HCT116 (cell line): ENCODE measurements at regions of chr1 and their contacts with region 1.

Region 1: GRCh38 chr1:241485554-241485992 is 34.0 kb downstream of the FH start:
- DNase-seq: peak; percentile 12
- ATAC-seq: peak; percentile 74
- H3K4me3 ChIP-seq: no peak overlapping the region
- H3K27ac ChIP-seq: no peak overlapping the region
- H3K4me1 ChIP-seq: peaks cover 2 to 19% of the 10 kb centered on the region in 2 experiments; a peak in 3 of 4 replicates
- H3K27me3 ChIP-seq: no peaks in the 10 kb centered on the region
- CTCF ChIP-seq: peak; percentile 15 to 61 (median 51); a peak in 4 of 6 replicates
- POLR2A ChIP-seq: no peak
- RAD21 ChIP-seq: peak; percentile 41; the same call in 1 of the 2 replicates

Region 2: DNA sequence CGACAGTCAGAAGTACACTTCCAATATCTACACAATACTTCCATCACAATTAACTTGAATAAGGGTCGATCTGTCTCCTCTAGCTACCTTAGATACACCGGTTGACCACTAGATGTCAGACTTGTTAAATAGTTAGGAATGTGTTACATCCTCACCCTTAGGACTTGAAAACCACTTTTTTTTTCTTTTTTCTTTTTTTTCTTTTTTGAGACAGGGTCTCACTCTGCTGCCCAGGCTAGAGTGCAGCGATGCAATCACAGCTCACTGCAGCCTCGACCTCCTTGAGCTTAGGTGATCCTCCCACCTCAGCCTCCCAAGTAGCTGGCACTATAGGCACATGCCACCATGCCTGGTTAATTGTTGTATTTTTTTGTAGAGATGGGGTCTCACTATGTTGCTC is 753.2 kb before region 1 on chr1:
- CTCF ChIA-PET with region 1: interaction called, 6 read pairs
- POLR2A ChIA-PET with region 1: no interaction called
- RAD21 ChIA-PET with region 1: no interaction called
- intact Hi-C with region 1: loop called (anchors 1 kb)
- DNase-seq: peak; percentile 12
- ATAC-seq: peak; percentile 76
- H3K4me3 ChIP-seq: no peak overlapping the region
- H3K27ac ChIP-seq: no peak overlapping the region
- H3K4me1 ChIP-seq: no peaks in the 10 kb centered on the region
- H3K27me3 ChIP-seq: no peaks in the 10 kb centered on the region
- CTCF ChIP-seq: peak; percentile 12 to 48 (median 32); a peak in 4 of 6 replicates
- POLR2A ChIP-seq: no peak
- RAD21 ChIP-seq: peak; percentile 56

Region 3: DNA sequence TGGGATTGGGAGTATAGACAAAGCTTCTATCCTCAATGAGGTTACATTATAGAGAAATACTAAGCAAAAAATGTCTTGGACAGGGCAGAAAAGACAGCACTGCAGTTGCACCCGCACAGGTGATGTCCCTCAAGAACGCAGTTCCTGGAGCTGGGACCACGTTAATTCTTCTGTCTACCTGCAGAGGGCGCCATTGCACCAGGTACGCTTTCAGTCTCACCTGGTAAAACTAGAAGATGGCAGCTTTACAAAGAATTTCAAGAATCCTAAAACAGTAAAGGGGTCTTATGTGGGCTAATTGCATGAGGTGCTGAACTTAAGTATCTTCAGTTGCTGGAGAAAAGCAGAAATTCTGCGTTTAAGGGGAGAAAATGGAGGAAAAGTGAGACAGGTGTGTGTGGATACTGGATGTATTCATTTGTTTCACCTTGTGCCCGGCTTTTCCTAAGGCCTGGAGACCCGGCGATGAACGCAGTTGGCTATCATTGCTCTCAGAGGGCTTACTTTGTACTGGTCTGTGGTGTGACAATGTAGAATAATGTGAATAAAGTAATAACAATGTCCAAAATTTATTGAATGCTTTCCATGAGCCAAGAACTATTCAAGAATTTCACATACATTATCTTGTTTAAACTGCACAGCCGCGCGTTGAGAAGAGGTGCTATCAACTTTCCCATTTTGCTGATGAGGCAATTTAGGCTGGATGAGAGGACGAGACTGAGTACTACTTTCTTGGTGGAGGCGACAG is 597.4 kb before region 1 on chr1:
- CTCF ChIA-PET with region 1: interaction called, 10 read pairs
- POLR2A ChIA-PET with region 1: no interaction called
- RAD21 ChIA-PET with region 1: no interaction called
- intact Hi-C with region 1: loop called (anchors 1 kb)
- DNase-seq: peak; percentile 3
- ATAC-seq: peak; percentile 65; the same call in 1 of the 2 replicates
- H3K4me3 ChIP-seq: no peak overlapping the region
- H3K27ac ChIP-seq: no peak overlapping the region
- H3K4me1 ChIP-seq: no peaks in the 10 kb centered on the region
- H3K27me3 ChIP-seq: no peaks in the 10 kb centered on the region
- CTCF ChIP-seq: peak; percentile 18 to 78 (median 53); a peak in 5 of 6 replicates
- POLR2A ChIP-seq: no peak
- RAD21 ChIP-seq: peak; percentile 53

Region 4: DNA sequence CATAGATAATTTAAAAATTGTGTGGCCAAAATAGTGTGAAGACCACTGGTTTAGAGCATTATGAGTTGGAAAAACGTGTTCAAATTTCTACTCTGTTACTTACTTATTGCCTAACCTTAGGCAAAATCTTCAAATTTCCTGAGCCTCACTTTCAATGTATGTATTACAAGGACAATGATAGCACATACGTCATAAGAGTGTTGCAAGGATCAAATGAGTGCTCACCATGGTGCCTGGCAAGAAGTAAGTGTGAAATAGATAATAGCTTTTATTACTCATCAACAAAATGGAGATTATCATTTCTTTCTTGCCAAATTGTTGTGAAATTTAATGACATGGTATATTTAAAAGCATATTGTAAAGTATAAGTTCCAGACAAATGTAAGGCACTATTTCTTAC is 23.2 kb before region 1 on chr1:
- CTCF ChIA-PET with region 1: no interaction called
- POLR2A ChIA-PET with region 1: no interaction called
- RAD21 ChIA-PET with region 1: no interaction called
- intact Hi-C with region 1: no loop called
- DNase-seq: no peak
- ATAC-seq: no peak
- H3K4me3 ChIP-seq: no peak overlapping the region
- H3K27ac ChIP-seq: no peak overlapping the region
- H3K4me1 ChIP-seq: no peaks in the 10 kb centered on the region; a peak in 1 of 4 replicates
- H3K27me3 ChIP-seq: no peaks in the 10 kb centered on the region
- CTCF ChIP-seq: no peak
- POLR2A ChIP-seq: no peak
- RAD21 ChIP-seq: no peak

Region 5: GRCh38 chr1:241817261-241817792 is 331.8 kb after region 1 on chr1:
- CTCF ChIA-PET with region 1: no interaction called
- POLR2A ChIA-PET with region 1: no interaction called
- RAD21 ChIA-PET with region 1: no interaction called
- intact Hi-C with region 1: no loop called
- DNase-seq: no peak
- ATAC-seq: no peak
- H3K4me3 ChIP-seq: no peak overlapping the region
- H3K27ac ChIP-seq: no peak overlapping the region
- H3K4me1 ChIP-seq: no peaks in the 10 kb centered on the region
- H3K27me3 ChIP-seq: no peaks in the 10 kb centered on the region
- CTCF ChIP-seq: no peak
- POLR2A ChIP-seq: no peak
- RAD21 ChIP-seq: no peak